ENCODE measurements at regions of chr1 and their contacts with region 1.

Region 1: GRCh38 chr1:12124693-12125421 is 41.9 kb upstream of the TNFRSF1B start:
- DNase-seq: peak; percentile 85
- H3K4me3 Mint-ChIP-seq: no peak overlapping the region
- H3K27ac Mint-ChIP-seq: peak overlapping the region; percentile 65
- H3K4me1 Mint-ChIP-seq: peaks cover 51% of the 10 kb centered on the region
- H3K27me3 Mint-ChIP-seq: peaks cover 26% of the 10 kb centered on the region

Region 2: GRCh38 chr1:12143631-12144155 is 18.8 kb after region 1 on chr1:
- CTCF ChIA-PET with region 1: interaction called, 11 read pairs
- DNase-seq: peak; percentile 54
- H3K4me3 Mint-ChIP-seq: no peak overlapping the region
- H3K27ac Mint-ChIP-seq: peak overlapping the region; percentile 87
- H3K4me1 Mint-ChIP-seq: peaks cover 64% of the 10 kb centered on the region
- H3K27me3 Mint-ChIP-seq: no peaks in the 10 kb centered on the region

Region 3: DNA sequence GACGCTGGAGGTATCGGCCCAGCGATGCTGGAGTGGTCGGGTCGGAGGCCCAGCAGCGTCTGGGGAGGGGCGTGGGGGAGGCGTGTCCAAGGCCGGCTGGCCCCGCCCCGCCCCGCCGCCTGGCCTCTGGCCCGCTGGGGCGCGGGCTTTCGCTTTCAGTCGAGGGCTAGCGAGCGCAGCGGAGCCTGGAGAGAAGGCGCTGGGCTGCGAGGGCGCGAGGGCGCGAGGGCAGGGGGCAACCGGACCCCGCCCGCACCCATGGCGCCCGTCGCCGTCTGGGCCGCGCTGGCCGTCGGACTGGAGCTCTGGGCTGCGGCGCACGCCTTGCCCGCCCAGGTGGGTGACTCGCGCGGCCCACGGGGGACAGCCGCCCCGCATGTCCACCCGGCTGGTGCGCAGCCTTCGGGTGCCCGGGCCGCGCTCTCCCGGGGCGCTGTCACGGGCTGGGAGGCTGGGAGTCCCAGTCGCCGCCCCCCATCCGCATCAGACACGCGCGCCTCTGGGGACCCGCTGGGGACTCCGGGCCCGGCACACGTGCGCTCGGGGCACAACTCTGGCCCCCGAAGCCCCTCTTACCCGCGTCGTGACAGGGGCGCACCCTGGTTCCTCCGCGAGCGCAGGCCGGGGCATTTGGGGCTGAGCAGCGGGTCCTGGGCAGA is 42.1 kb after region 1 on chr1 and contains the start of gene TNFRSF1B:
- CTCF ChIA-PET with region 1: interaction called, 18 read pairs
- DNase-seq: peak; percentile 83
- H3K4me3 Mint-ChIP-seq: peak within 1 kb of the TSS; percentile 100
- H3K27ac Mint-ChIP-seq: peak within 1 kb of the TSS; percentile 97
- H3K4me1 Mint-ChIP-seq: peaks cover 84% of the 10 kb centered on the region
- H3K27me3 Mint-ChIP-seq: no peaks in the 10 kb centered on the region

Region 4: DNA sequence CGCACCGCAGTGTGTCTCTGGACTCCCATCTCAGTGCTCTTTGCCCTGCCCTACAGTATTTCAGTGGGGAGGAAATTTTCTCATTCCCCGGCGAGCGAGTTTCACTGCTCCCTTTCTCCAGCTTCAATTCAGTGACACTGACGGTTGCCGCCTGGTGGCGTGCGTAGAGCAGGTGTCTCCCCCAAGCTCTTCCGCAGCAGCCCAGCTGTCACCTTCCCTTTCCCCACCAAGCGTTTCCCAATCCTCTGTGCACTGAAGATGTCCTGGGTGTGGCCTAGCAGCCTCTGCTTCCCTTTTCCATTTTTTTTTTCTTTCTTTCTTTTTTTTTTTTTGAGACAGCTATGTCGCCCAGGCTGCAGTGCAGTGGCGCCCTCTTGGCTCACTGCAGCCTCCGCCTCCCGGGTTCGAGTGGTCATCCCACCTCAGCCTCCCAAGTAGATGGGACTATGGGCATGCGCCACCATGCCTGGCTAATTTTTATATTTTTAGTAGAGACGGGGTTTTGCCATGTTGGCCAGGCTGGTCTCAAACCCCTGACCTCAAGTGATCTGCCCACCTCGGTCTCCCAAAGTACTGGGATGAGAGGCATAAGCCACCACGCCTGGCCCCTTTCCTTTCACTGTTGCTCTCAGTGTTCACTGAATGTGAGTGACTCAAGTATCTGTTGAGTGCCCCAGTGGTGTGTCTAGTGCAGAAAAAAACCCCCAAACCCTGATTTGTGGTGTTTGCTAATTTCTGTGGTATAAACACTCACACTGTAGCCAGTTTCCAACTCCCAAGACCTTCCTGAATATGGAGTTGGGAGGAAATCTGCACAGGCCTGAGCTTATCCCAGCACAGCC is 72.0 kb after region 1 on chr1:
- CTCF ChIA-PET with region 1: interaction called, 252 read pairs
- DNase-seq: no peak
- H3K4me3 Mint-ChIP-seq: no peak overlapping the region
- H3K27ac Mint-ChIP-seq: peak overlapping the region; percentile 56
- H3K4me1 Mint-ChIP-seq: peaks cover 35% of the 10 kb centered on the region
- H3K27me3 Mint-ChIP-seq: no peaks in the 10 kb centered on the region

Region 5: DNA sequence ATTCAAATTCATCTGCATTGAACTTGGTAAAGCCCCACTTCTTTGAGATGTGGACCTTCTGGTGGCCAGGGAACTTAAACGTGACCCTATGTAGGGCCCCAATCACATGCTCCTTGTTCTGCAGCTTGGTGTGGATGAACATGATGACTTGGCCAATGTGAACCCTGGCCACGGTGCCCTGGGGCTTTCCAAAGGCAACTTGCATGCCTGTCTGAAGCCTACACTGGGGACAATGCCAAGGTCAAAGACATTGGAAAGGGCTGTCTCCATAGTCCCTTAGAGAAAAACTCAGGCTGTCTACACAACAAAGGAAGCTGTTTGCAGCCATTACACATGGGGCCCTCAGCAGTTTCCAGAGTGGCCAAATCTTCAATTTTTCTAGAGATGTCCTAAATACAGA is 96.0 kb after region 1 on chr1:
- CTCF ChIA-PET with region 1: interaction called, 14 read pairs
- DNase-seq: no peak
- H3K4me3 Mint-ChIP-seq: no peak overlapping the region
- H3K27ac Mint-ChIP-seq: no peak overlapping the region
- H3K4me1 Mint-ChIP-seq: no peaks in the 10 kb centered on the region
- H3K27me3 Mint-ChIP-seq: peaks cover 64% of the 10 kb centered on the region

Region 6: DNA sequence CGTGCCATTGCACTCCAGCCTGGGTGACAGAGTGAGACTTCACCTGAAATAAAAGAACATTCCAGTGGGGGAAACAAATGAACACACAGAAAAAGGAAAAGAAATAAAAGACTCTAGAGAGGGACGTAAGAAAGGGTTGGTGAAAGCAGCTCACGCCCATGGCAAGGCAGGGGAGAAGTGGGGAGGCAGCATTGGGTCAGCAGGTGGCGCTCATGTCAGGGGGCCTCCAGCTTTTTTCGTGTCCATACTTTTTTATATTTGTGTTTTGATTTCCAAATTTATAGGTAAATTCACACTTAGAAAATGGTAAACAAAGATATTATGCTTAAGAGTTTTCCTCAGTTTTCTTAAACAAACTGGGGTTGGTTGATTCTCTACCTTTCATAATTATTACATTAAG is 150.5 kb after region 1 on chr1:
- CTCF ChIA-PET with region 1: interaction called, 23 read pairs
- DNase-seq: peak; percentile 61
- H3K4me3 Mint-ChIP-seq: no peak overlapping the region
- H3K27ac Mint-ChIP-seq: no peak overlapping the region
- H3K4me1 Mint-ChIP-seq: no peaks in the 10 kb centered on the region
- H3K27me3 Mint-ChIP-seq: no peaks in the 10 kb centered on the region

Measured in activated naive CD4-positive, alpha-beta T cell treated with anti-CD3 and anti-CD28 coated beads, Interleukin-2, amount 10 ng/mL, durations not matched to agents 7 days and 5 days (primary cell).